Activated naive CD4-positive, alpha-beta T cell treated with anti-CD3 and anti-CD28 coated beads for 36 hours (primary cell): ENCODE measurements at regions of chr3 and their contacts with region 1.

Region 1: GRCh38 chr3:27721717-27722542 is at the start of gene EOMES:
- DNase-seq: peak; percentile 79
- H3K4me3 Mint-ChIP-seq: peak within 1 kb of the TSS; percentile 75
- H3K27ac Mint-ChIP-seq: no peak within 1 kb of the TSS
- H3K4me1 Mint-ChIP-seq: peaks cover 21% of the 10 kb centered on the region
- H3K27me3 Mint-ChIP-seq: peaks cover 68% of the 10 kb centered on the region
- total RNA-seq, gene EOMES: 0.12 to 0.14 TPM

Region 2: DNA sequence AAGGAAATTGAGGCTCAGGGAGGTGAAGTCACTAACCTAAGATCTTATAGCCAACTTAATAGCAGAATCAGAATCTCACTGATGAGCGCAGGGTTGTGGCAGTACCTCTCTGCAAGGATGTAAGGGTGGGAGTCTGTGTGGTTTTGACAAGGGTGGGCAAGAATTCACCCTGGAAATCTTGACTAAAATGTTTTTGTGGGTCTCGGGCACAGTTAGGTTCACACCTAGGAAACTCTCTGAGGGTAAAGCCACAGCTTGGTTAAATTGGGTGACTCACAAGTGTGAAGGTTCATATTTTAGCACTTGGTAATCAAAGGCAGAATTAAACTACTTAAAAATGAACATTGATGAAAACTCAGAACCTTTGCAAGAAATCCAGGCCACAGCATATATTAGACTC is 178.4 kb after region 1 on chr3:
- CTCF ChIA-PET with region 1: no interaction called
- intact Hi-C with region 1: loop called (anchors 5 kb)
- DNase-seq: peak; percentile 34
- H3K4me3 Mint-ChIP-seq: no peak overlapping the region
- H3K27ac Mint-ChIP-seq: no peak overlapping the region
- H3K4me1 Mint-ChIP-seq: peaks cover 38% of the 10 kb centered on the region
- H3K27me3 Mint-ChIP-seq: no peaks in the 10 kb centered on the region

Region 3: GRCh38 chr3:27943106-27943505 is 221.2 kb after region 1 on chr3:
- CTCF ChIA-PET with region 1: no interaction called
- intact Hi-C with region 1: no loop called
- DNase-seq: peak; percentile 34
- H3K4me3 Mint-ChIP-seq: no peak overlapping the region
- H3K27ac Mint-ChIP-seq: no peak overlapping the region
- H3K4me1 Mint-ChIP-seq: peaks cover 2% of the 10 kb centered on the region
- H3K27me3 Mint-ChIP-seq: no peaks in the 10 kb centered on the region

Region 4: GRCh38 chr3:28089527-28089897 is 367.6 kb after region 1 on chr3:
- CTCF ChIA-PET with region 1: no interaction called
- intact Hi-C with region 1: loop called (anchors 2 kb)
- DNase-seq: no peak
- H3K4me3 Mint-ChIP-seq: no peak overlapping the region
- H3K27ac Mint-ChIP-seq: no peak overlapping the region
- H3K4me1 Mint-ChIP-seq: no peaks in the 10 kb centered on the region
- H3K27me3 Mint-ChIP-seq: no peaks in the 10 kb centered on the region

Region 5: GRCh38 chr3:28171962-28172361 is 450.0 kb after region 1 on chr3:
- CTCF ChIA-PET with region 1: no interaction called
- intact Hi-C with region 1: loop called (anchors 5 kb)
- DNase-seq: no peak
- H3K4me3 Mint-ChIP-seq: peak overlapping the region; percentile 42
- H3K27ac Mint-ChIP-seq: peak overlapping the region; percentile 85
- H3K4me1 Mint-ChIP-seq: peaks cover 11% of the 10 kb centered on the region
- H3K27me3 Mint-ChIP-seq: no peaks in the 10 kb centered on the region

Region 6: DNA sequence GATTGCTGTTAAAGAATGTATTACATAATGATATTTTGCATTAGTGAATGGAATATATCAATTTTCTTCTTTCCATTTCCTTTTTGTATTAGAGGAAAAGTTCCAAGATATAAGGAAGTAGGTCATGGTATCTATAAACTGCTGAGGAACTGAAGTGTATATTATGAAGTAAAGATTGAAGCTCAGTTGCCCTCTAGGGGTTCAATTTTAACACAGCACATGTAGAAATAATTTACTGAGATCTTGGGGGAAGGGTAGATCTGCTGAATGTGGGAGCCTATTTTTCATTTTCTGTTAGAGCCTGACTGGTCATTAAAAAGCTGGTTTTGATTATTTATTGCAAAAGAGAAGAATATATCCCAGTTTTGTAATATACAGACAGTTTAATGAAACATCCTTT is 564.7 kb after region 1 on chr3:
- CTCF ChIA-PET with region 1: interaction called, 3 read pairs
- intact Hi-C with region 1: loop called (anchors 1 kb)
- DNase-seq: no peak
- H3K4me3 Mint-ChIP-seq: no peak overlapping the region
- H3K27ac Mint-ChIP-seq: no peak overlapping the region
- H3K4me1 Mint-ChIP-seq: peaks cover 2% of the 10 kb centered on the region
- H3K27me3 Mint-ChIP-seq: no peaks in the 10 kb centered on the region